T-cell (primary cell): ENCODE measurements at regions of chr20 and their contacts with region 1.

Region 1: DNA sequence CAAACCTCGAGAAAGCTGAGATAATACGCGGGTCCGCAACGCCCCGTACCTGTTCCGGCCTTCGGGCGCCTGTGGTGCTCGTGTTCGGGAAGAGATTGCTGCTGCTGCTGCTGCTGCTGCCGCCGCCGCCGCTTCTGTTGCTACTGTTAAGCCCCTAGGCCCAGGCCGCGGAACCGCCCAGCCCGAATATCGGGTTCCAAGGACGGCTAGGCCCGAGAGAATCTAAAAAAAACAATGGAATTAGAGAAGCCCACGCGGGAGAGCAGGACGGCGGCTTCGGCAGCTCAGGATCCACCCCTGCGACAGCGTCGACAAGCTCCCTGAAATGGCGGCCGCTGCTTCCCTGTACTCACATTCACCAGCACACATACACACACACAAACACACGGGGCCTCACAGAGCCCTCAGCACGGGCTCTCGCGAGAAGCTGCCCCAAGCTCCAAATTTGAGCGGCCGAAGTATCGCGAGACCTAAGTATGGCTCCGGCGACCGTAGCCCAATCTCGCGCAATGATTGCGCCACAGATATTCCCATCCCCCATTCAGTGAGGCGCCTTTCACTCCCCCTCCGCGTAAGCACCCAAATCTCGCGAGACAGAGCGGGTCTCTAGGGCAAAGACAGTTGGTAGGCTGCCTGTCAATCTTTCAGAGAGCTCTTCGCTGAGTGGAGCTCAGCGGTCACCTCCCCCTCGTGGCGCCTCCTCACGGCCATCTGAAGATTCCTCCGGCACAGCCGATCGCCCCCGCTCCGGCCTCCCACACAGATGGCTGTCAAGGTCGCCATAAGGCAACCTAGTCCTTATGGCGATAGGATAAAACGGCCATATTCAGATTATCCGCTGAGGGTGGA is at the start of gene RBM39:
- DNase-seq: peak; percentile 96 to 100 (median 99)
- ATAC-seq: peak; percentile 85 to 88 (median 86)
- H3K4me3 ChIP-seq: peak within 1 kb of the TSS; percentile 89 to 99
- H3K4me3 Mint-ChIP-seq: peak within 1 kb of the TSS; percentile 94 to 100 (median 99)
- H3K27ac ChIP-seq: peak within 1 kb of the TSS; percentile 99
- H3K27ac Mint-ChIP-seq: peak within 1 kb of the TSS; percentile 100
- H3K4me1 ChIP-seq: peaks cover 43% of the 10 kb centered on the region in 2 experiments
- H3K4me1 Mint-ChIP-seq: peaks cover 48 to 70% (median 52%) of the 10 kb centered on the region in 3 donors
- H3K27me3 ChIP-seq: no peaks in the 10 kb centered on the region
- H3K27me3 Mint-ChIP-seq: no peaks in the 10 kb centered on the region
- total RNA-seq, gene RBM39: 482 to 966 (median 536) TPM

Region 2: DNA sequence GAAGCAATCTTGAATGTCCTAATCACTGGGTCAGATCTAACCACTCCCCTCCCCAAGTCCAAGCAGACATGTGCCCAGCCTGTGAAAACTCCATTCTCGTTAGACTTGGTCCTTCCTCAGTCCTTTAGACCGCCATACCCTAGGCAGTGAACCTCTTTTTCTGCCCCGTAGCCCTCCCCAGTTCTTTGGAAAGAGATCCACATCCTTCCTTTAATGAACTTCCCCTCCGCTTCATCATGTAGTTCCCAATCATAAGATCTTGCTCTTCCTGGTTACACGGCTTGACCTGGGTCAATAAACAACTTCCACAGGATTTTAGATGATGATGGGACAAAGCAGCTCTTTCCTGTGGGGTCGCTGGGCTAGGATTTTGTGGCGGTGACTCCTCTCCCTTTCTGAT is 1448.5 kb before region 1 on chr20:
- CTCF ChIA-PET with region 1: no interaction called
- POLR2A ChIA-PET with region 1: no interaction called
- DNase-seq: no peak
- ATAC-seq: no peak
- H3K4me3 ChIP-seq: no peak overlapping the region
- H3K4me3 Mint-ChIP-seq: no peak overlapping the region
- H3K27ac ChIP-seq: no peak overlapping the region
- H3K27ac Mint-ChIP-seq: no peak overlapping the region
- H3K4me1 ChIP-seq: no peaks in the 10 kb centered on the region
- H3K4me1 Mint-ChIP-seq: no peaks in the 10 kb centered on the region
- H3K27me3 ChIP-seq: no peaks in the 10 kb centered on the region
- H3K27me3 Mint-ChIP-seq: no peaks in the 10 kb centered on the region

Region 3: DNA sequence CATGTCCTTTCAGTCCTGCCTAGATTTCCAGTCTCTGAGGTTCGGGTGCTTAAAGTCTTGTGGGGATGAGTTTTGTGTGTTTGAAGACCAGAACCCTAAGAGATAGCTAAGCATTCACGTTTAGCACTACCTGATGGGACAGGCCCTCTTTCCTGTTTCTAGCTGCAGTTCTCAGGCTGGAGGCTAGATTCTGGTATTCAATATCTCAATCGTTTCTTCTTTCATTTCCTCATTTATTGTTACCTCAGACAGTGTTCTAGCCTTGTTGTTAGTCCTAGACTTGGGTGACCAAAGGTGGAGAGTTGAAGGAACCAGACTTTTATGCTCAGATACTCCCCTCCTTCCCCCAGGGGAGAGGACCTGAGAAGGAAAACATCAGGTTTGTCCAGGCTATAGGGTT is 269.9 kb before region 1 on chr20:
- CTCF ChIA-PET with region 1: no interaction called
- POLR2A ChIA-PET with region 1: no interaction called
- DNase-seq: no peak
- ATAC-seq: no peak
- H3K4me3 ChIP-seq: no peak overlapping the region
- H3K4me3 Mint-ChIP-seq: no peak overlapping the region
- H3K27ac ChIP-seq: no peak overlapping the region
- H3K27ac Mint-ChIP-seq: peak overlapping the region in 1 of 2 donors; percentile 44
- H3K4me1 ChIP-seq: no peaks in the 10 kb centered on the region
- H3K4me1 Mint-ChIP-seq: peaks cover 0 to 2% (median 0%) of the 10 kb centered on the region in 3 donors
- H3K27me3 ChIP-seq: no peaks in the 10 kb centered on the region
- H3K27me3 Mint-ChIP-seq: no peaks in the 10 kb centered on the region

Region 4: DNA sequence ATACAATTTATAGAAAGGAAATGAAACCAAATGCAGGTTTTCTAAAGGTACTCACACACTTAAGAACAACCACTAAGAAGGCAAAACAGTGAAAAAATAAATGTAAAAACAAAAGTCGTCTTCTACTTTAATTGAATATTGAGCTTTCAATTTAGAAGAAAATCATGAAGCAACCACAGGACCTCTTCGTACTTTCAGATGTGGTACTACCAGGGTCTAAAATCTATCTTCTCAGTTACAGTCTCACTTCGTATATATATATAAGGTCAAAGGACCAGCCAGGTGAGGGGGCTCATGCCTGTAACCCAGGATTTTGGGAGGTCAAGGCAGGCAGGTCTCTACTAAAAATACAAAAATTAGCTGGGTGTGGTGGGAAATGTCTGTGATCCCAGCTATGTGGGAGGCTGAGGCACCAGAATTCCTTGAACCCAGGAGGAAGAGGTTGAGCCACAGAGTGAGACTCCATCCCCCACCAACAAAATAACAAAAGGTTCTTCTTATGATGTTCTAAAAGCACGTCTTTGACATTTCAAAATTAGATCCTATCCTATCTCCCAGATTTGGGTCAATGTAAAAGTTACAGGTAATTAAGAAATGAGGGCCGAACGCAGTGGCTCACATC is 30.4 kb before region 1 on chr20:
- CTCF ChIA-PET with region 1: interaction called in 1 of 2 experiments, 6 read pairs
- POLR2A ChIA-PET with region 1: interaction called, 4 to 20 read pairs
- DNase-seq: no peak
- ATAC-seq: no peak
- H3K4me3 ChIP-seq: no peak overlapping the region
- H3K4me3 Mint-ChIP-seq: peak overlapping the region; percentile 39 to 47 (median 43)
- H3K27ac ChIP-seq: peak overlapping the region; percentile 35
- H3K27ac Mint-ChIP-seq: peak overlapping the region; percentile 78 to 79
- H3K4me1 ChIP-seq: peaks cover 2 to 26% of the 10 kb centered on the region in 2 experiments
- H3K4me1 Mint-ChIP-seq: peaks cover 49 to 64% (median 61%) of the 10 kb centered on the region in 3 donors
- H3K27me3 ChIP-seq: no peaks in the 10 kb centered on the region
- H3K27me3 Mint-ChIP-seq: no peaks in the 10 kb centered on the region

Region 5: GRCh38 chr20:35729836-35730582 is 12.1 kb before region 1 on chr20:
- CTCF ChIA-PET with region 1: interaction called in 1 of 2 experiments, 13 read pairs
- POLR2A ChIA-PET with region 1: interaction called, 4 to 29 read pairs
- DNase-seq: no peak
- ATAC-seq: no peak
- H3K4me3 ChIP-seq: no peak overlapping the region
- H3K4me3 Mint-ChIP-seq: peak overlapping the region in 2 of 3 donors; percentile 4 to 31
- H3K27ac ChIP-seq: no peak overlapping the region
- H3K27ac Mint-ChIP-seq: no peak overlapping the region
- H3K4me1 ChIP-seq: peaks cover 14 to 22% of the 10 kb centered on the region in 2 experiments
- H3K4me1 Mint-ChIP-seq: peaks cover 58 to 63% (median 62%) of the 10 kb centered on the region in 3 donors
- H3K27me3 ChIP-seq: no peaks in the 10 kb centered on the region
- H3K27me3 Mint-ChIP-seq: no peaks in the 10 kb centered on the region

Region 6: DNA sequence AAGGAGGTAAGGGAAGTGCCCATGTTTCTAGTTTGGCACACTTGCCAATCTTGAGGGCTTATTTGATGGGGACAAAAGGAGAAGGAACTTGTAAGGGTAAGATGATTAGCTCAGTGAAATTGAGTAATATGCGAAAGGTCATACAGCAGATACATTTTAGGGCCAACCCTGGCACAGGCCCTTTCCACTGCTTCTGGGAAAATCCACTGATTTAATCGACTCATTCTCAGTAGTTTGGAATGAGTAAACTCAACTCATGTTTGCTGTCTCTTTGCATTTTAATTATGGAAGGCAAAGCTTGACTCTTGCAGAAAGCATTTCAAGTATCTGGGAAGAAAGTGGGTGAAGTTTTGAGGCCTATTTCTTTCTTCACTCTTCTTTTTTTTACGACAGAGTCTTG is 49.7 kb after region 1 on chr20:
- CTCF ChIA-PET with region 1: interaction called in 1 of 2 experiments, 3 read pairs
- POLR2A ChIA-PET with region 1: interaction called, 4 to 11 read pairs
- DNase-seq: no peak
- ATAC-seq: no peak
- H3K4me3 ChIP-seq: no peak overlapping the region
- H3K4me3 Mint-ChIP-seq: no peak overlapping the region
- H3K27ac ChIP-seq: no peak overlapping the region
- H3K27ac Mint-ChIP-seq: no peak overlapping the region
- H3K4me1 ChIP-seq: peaks cover 8 to 16% of the 10 kb centered on the region in 2 experiments
- H3K4me1 Mint-ChIP-seq: peaks cover 37 to 45% (median 40%) of the 10 kb centered on the region in 3 donors
- H3K27me3 ChIP-seq: no peaks in the 10 kb centered on the region
- H3K27me3 Mint-ChIP-seq: no peaks in the 10 kb centered on the region